Gastrocnemius medialis (tissue), 4 donors: ENCODE measurements at regions of chr5 and their contacts with region 1.

Region 1: GRCh38 chr5:14351845-14352712 is 208.9 kb downstream of the TRIO start:
- DNase-seq: peak; percentile 19 to 57
- ATAC-seq: peak; percentile 78 to 94
- H3K4me3 ChIP-seq: no peak overlapping the region
- H3K27ac ChIP-seq: no peak overlapping the region
- H3K4me1 ChIP-seq: no peaks in the 10 kb centered on the region
- H3K27me3 ChIP-seq: no peaks in the 10 kb centered on the region
- CTCF ChIP-seq: peak; percentile 69 to 96 (median 79)
- POLR2A ChIP-seq: no peak

Region 2: GRCh38 chr5:14628346-14628745 is 276.3 kb after region 1 on chr5:
- in situ Hi-C with region 1: loop called in 2 of 4 experiments (anchors 25 kb)
- intact Hi-C with region 1: no loop called
- DNase-seq: no peak
- ATAC-seq: no peak
- H3K4me3 ChIP-seq: no peak overlapping the region
- H3K27ac ChIP-seq: no peak overlapping the region
- H3K4me1 ChIP-seq: no peaks in the 10 kb centered on the region
- H3K27me3 ChIP-seq: no peaks in the 10 kb centered on the region
- CTCF ChIP-seq: no peak
- POLR2A ChIP-seq: no peak